ENCODE measurements at regions of chr19 and their contacts with region 1.

Region 1: DNA sequence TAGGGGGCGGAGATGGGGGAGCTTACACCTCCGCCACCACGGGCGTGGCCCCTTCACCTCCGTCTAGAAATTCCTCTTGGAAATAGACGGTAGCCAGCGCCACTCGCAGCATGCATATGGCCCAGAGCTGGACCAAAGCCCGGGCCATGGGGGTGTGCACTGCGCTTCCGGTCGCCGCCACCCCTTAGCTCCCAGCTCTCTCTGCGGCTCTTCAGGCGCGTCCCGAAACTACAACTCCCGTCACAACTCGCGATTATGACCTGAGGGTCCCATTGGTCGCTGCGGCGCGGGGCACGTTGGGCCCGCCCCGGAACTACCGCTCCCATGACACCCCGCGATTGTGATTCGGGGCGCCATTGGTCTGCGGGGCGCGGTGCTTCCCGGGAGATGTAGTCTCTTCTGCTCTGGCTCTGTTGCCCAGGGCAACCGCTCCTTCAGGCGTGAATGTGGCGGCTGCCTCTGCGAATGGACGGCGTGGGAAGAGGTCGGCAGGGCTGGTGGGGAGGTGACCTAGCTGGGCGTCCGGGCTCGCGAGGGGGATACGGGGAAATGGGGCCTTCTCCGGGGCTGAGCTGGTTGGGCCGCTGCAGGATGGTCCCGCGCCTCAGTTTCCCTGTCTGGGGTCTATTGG is at the starts of genes C19orf44 and CALR3:
- DNase-seq: peak; percentile 99
- H3K4me3 ChIP-seq: peak within 1 kb of the TSS; percentile 74 to 99 (median 84)
- H3K27ac ChIP-seq: peak within 1 kb of the TSS; percentile 54
- H3K4me1 ChIP-seq: peaks cover 7% of the 10 kb centered on the region
- H3K27me3 ChIP-seq: no peaks in the 10 kb centered on the region
- CTCF ChIP-seq: peak in 1 of 2 donors; percentile 17
- total RNA-seq, gene C19orf44: 4.8 to 5.8 TPM
- total RNA-seq, gene CALR3: not detected

Region 2: DNA sequence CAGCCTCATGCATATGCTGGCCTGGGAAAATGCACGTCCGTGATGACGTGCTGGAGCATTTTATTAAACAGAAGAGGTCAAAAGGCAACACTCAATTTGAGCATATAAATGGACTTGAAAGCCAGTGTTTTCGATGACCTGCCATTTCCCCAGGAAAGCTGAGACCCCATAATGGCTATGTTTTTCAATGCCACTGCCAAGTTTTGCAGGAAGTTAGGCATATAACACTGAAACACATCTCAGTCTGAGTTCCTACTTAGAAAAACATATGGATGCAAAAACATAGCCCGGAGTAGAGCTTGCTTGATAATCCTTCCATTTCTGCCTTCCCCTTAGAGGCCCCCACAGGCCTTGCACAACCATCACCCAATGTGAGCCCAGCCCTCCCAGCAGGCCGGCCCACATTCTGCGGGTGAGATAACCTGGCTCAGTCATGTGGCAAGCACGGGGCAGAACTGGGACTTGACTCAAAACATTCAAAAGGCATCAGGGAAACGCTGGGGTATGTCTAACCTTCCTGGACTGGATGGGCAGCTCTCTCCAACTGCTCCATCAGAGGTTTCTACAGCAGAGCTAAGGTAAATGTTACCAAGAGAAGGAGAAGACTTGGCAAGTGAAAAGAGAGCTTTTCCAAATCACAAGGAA is 49.3 kb before region 1 on chr19:
- CTCF ChIA-PET with region 1: no interaction called
- dilution Hi-C with region 1: no loop called
- in situ Hi-C with region 1: no loop called
- intact Hi-C with region 1: loop called (anchors 2 kb)
- DNase-seq: peak; percentile 70
- H3K4me3 ChIP-seq: no peak overlapping the region
- H3K27ac ChIP-seq: no peak overlapping the region
- H3K4me1 ChIP-seq: peaks cover 11% of the 10 kb centered on the region
- H3K27me3 ChIP-seq: no peaks in the 10 kb centered on the region
- CTCF ChIP-seq: no peak

Region 3: GRCh38 chr19:16470911-16471811 is 24.9 kb before region 1 on chr19:
- CTCF ChIA-PET with region 1: no interaction called
- dilution Hi-C with region 1: no loop called
- in situ Hi-C with region 1: no loop called
- intact Hi-C with region 1: loop called (anchors 1 kb)
- DNase-seq: peak; percentile 53
- H3K4me3 ChIP-seq: peak overlapping the region; percentile 67 to 87 (median 70)
- H3K27ac ChIP-seq: peak overlapping the region; percentile 40
- H3K4me1 ChIP-seq: peaks cover 13% of the 10 kb centered on the region
- H3K27me3 ChIP-seq: no peaks in the 10 kb centered on the region
- CTCF ChIP-seq: no peak